ENCODE measurements at regions of chr7 and their contacts with region 1.

Region 1: DNA sequence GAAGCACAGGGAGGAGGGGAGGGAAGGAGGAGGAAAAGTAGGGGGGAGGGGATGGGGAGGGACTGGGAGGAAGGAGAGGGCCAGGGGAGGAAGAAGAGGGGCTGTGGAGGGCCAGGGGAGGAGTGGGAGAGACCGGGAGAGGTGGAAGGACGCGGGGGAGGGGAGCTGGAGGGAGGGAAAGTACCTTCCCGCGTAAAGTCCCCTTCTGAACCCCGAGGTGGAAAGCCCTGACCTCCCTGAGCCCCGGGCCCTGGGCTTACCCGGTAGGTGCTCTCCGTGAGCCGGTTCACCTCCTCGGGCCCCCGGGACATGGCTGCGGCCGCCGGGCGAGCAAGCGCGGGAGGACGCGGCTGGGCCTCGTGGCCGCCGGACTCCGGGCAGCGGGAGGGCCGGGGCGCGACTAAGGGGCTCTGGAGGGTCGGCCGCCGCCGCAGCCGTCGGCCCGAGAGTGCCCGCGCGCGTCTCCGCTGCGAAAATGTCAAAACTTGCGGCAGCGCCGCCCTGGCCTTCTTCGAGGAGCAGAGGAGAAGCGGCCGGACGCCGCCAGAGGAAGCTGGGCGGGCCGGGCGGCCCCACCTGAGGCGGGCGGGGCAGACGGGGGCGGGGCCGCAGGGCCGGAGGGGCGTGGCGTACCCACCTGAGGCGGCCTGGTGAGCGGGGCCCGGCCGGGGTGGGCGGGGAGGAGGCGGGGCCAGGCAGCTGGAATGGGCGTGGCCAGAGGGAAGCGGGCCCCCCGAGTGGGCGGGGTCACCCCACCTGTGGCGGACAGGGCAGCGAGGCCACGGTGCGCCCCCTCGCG is at the start of gene BAIAP2L1:
- DNase-seq: peak; percentile 67 to 94
- ATAC-seq: peak; percentile 84 to 89
- H3K4me3 ChIP-seq: peak within 1 kb of the TSS; percentile 89
- H3K27ac ChIP-seq: peak within 1 kb of the TSS; percentile 98
- H3K4me1 ChIP-seq: peaks cover 31% of the 10 kb centered on the region
- CTCF ChIP-seq: no peak
- EP300 ChIP-seq: no peak
- POLR2A ChIP-seq: peak; percentile 57
- RAD21 ChIP-seq: peak in 1 of 2 experiments; percentile 85
- polyA plus RNA-seq, gene BAIAP2L1: 79.1 and 89.3 TPM in 2 replicates

Region 2: DNA sequence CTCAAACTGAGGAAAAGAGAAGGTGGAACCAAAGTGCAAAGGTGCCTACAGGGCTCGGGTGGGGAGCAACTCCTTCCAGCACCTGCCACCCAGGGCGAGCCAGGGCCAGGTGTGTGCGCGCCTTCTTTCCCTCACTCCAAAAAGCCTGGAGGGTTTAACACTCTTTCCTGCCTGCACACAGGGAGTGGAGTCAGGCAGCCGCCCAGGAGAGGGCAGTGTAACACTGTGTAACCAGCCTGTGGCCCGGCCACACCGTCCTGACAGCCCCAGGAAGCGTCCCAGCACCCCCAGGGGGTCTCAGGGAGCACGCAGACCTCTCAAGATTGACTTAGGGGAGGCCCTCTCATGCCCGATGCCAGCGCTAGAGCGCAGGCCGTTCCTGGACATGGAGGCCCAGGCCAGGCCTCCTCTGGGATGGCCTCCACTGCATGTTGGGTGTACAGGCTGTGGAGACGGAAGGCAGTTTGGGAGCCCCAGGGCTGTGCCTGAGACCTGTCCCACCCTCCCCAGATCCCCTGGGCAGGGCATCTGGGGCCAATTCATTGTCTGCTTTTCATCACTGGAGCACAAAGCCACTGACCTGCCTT is 105.9 kb before region 1 on chr7:
- CTCF ChIA-PET with region 1: interaction called, 49 read pairs
- POLR2A ChIA-PET with region 1: interaction called, 7 read pairs
- DNase-seq: peak; percentile 75 to 85
- ATAC-seq: peak; percentile 82 to 90
- H3K4me3 ChIP-seq: no peak overlapping the region
- H3K27ac ChIP-seq: peak overlapping the region; percentile 40 to 81
- H3K4me1 ChIP-seq: peaks cover 13% of the 10 kb centered on the region
- CTCF ChIP-seq: peak; percentile 90
- EP300 ChIP-seq: no peak
- POLR2A ChIP-seq: no peak
- RAD21 ChIP-seq: peak; percentile 93 to 96

Region 3: GRCh38 chr7:98323597-98324322 is 77.0 kb before region 1 on chr7:
- CTCF ChIA-PET with region 1: interaction called, 34 read pairs
- POLR2A ChIA-PET with region 1: interaction called, 3 read pairs
- DNase-seq: no peak
- ATAC-seq: no peak
- H3K4me3 ChIP-seq: no peak overlapping the region
- H3K27ac ChIP-seq: no peak overlapping the region
- H3K4me1 ChIP-seq: no peaks in the 10 kb centered on the region
- CTCF ChIP-seq: no peak
- EP300 ChIP-seq: no peak
- POLR2A ChIP-seq: no peak
- RAD21 ChIP-seq: no peak

Region 4: DNA sequence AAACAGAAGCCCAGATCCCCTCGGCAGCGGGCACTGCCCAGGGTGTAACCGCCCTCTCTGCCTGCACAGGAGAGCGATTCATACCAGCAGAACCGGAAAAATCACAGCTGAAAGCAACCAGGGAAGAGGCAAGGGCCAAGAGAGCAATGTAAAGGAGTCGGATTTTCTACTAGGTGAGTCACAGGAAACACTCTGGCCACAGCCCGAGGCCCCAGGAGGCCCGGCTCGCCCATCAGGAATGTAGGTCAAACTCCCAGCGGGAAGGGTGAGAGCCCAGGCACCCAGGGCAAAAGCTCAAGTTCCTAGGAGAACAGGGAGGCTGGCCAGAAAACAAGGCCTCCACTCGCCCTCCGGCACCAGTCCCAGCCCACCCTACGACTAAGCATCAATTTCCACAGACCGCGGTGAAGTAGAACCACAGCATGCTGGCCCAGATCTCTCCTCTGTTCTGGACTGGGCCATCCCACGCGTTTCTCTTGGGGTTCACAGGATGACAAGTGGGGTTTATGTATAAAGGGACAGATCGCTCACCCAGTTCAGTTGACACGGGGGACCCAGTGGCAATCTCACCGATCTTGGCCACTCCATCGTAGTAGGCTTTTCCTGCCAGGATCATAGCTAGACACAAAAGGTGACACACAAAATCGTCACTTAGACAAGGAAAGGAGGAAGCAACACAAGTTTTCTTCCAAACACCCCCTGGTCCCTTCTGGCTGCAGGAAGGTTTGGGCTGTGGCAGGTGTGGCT is 46.1 kb before region 1 on chr7:
- CTCF ChIA-PET with region 1: interaction called, 31 read pairs
- POLR2A ChIA-PET with region 1: interaction called, 14 read pairs
- DNase-seq: peak; percentile 69 to 94
- ATAC-seq: peak; percentile 88 to 93
- H3K4me3 ChIP-seq: peak overlapping the region; percentile 23; the same call in 2 of the 3 replicates
- H3K27ac ChIP-seq: peak overlapping the region; percentile 95 to 97
- H3K4me1 ChIP-seq: peaks cover 75% of the 10 kb centered on the region
- CTCF ChIP-seq: no peak
- EP300 ChIP-seq: peak; percentile 67 to 83; a peak in 3 of 5 replicates
- POLR2A ChIP-seq: no peak
- RAD21 ChIP-seq: peak in 1 of 2 experiments; percentile 31; a peak in 2 of 5 replicates

Region 5: GRCh38 chr7:98372993-98373392 is 27.7 kb before region 1 on chr7:
- CTCF ChIA-PET with region 1: interaction called, 22 read pairs
- POLR2A ChIA-PET with region 1: interaction called, 3 read pairs
- DNase-seq: no peak
- ATAC-seq: no peak
- H3K4me3 ChIP-seq: no peak overlapping the region
- H3K27ac ChIP-seq: peak overlapping the region in 1 of 2 experiments; percentile 16; a peak in 1 of 6 replicates
- H3K4me1 ChIP-seq: peaks cover 44% of the 10 kb centered on the region
- CTCF ChIP-seq: no peak
- EP300 ChIP-seq: no peak
- POLR2A ChIP-seq: no peak
- RAD21 ChIP-seq: no peak

Region 6: GRCh38 chr7:98420966-98421612 is 20.3 kb after region 1 on chr7:
- CTCF ChIA-PET with region 1: interaction called, 192 read pairs
- POLR2A ChIA-PET with region 1: interaction called, 18 read pairs
- DNase-seq: peak; percentile 89 to 92
- ATAC-seq: peak; percentile 53 to 64; a peak in 5 of 6 replicates
- H3K4me3 ChIP-seq: no peak overlapping the region
- H3K27ac ChIP-seq: peak overlapping the region; percentile 55 to 72
- H3K4me1 ChIP-seq: peaks cover 43% of the 10 kb centered on the region
- CTCF ChIP-seq: peak; percentile 94
- EP300 ChIP-seq: no peak
- POLR2A ChIP-seq: no peak
- RAD21 ChIP-seq: peak; percentile 83 to 84

Region 7: GRCh38 chr7:98548981-98549380 is 148.2 kb after region 1 on chr7:
- CTCF ChIA-PET with region 1: no interaction called
- POLR2A ChIA-PET with region 1: no interaction called
- DNase-seq: no peak
- ATAC-seq: no peak; a peak in 1 of 6 replicates
- H3K4me3 ChIP-seq: no peak overlapping the region
- H3K27ac ChIP-seq: no peak overlapping the region
- H3K4me1 ChIP-seq: no peaks in the 10 kb centered on the region
- CTCF ChIP-seq: no peak
- EP300 ChIP-seq: no peak
- POLR2A ChIP-seq: no peak
- RAD21 ChIP-seq: no peak

Measured in A549 (cell line).